ENCODE measurements at regions of chr3 and their contacts with region 1.

Region 1: GRCh38 chr3:49339945-49340800 is at the start of gene USP4:
- DNase-seq: peak; percentile 91
- H3K4me3 ChIP-seq: peak within 1 kb of the TSS; percentile 65 to 75 (median 75)
- H3K27ac ChIP-seq: peak within 1 kb of the TSS; percentile 80
- H3K4me1 ChIP-seq: peaks cover 28% of the 10 kb centered on the region
- H3K27me3 ChIP-seq: no peaks in the 10 kb centered on the region
- CTCF ChIP-seq: peak; percentile 45 to 52
- POLR2A ChIP-seq: peak; percentile 87
- total RNA-seq, gene USP4: 61.3 and 63.0 TPM in 2 replicates

Region 2: GRCh38 chr3:49153349-49153912 is 186.7 kb before region 1 on chr3:
- CTCF ChIA-PET with region 1: no interaction called
- POLR2A ChIA-PET with region 1: no interaction called
- dilution Hi-C with region 1: no loop called
- intact Hi-C with region 1: no loop called
- DNase-seq: no peak
- H3K4me3 ChIP-seq: no peak overlapping the region
- H3K27ac ChIP-seq: no peak overlapping the region
- H3K4me1 ChIP-seq: no peaks in the 10 kb centered on the region
- H3K27me3 ChIP-seq: no peaks in the 10 kb centered on the region
- CTCF ChIP-seq: no peak
- POLR2A ChIP-seq: no peak

Region 3: GRCh38 chr3:49238274-49239127 is 101.7 kb before region 1 on chr3:
- CTCF ChIA-PET with region 1: no interaction called
- POLR2A ChIA-PET with region 1: no interaction called
- dilution Hi-C with region 1: no loop called
- intact Hi-C with region 1: no loop called
- DNase-seq: peak; percentile 99
- H3K4me3 ChIP-seq: no peak overlapping the region
- H3K27ac ChIP-seq: peak overlapping the region; percentile 64
- H3K4me1 ChIP-seq: no peaks in the 10 kb centered on the region
- H3K27me3 ChIP-seq: no peaks in the 10 kb centered on the region
- CTCF ChIP-seq: no peak
- POLR2A ChIP-seq: no peak

Region 4: GRCh38 chr3:49351521-49352011 is 11.4 kb after region 1 on chr3:
- CTCF ChIA-PET with region 1: interaction called, 68 read pairs
- POLR2A ChIA-PET with region 1: interaction called, 39 read pairs
- dilution Hi-C with region 1: no loop called
- intact Hi-C with region 1: no loop called
- DNase-seq: peak; percentile 70
- H3K4me3 ChIP-seq: no peak overlapping the region
- H3K27ac ChIP-seq: peak overlapping the region; percentile 1
- H3K4me1 ChIP-seq: peaks cover 29% of the 10 kb centered on the region
- H3K27me3 ChIP-seq: no peaks in the 10 kb centered on the region
- CTCF ChIP-seq: no peak
- POLR2A ChIP-seq: no peak

Region 5: GRCh38 chr3:49358217-49358883 is 18.2 kb after region 1 on chr3 and contains the start of gene GPX1:
- CTCF ChIA-PET with region 1: interaction called, 68 read pairs
- POLR2A ChIA-PET with region 1: interaction called, 39 read pairs
- dilution Hi-C with region 1: no loop called
- intact Hi-C with region 1: loop called (anchors 1 kb)
- DNase-seq: peak; percentile 94
- H3K4me3 ChIP-seq: peak within 1 kb of the TSS; percentile 25 to 76 (median 71)
- H3K27ac ChIP-seq: peak within 1 kb of the TSS; percentile 66
- H3K4me1 ChIP-seq: peaks cover 31% of the 10 kb centered on the region
- H3K27me3 ChIP-seq: no peaks in the 10 kb centered on the region
- CTCF ChIP-seq: no peak
- POLR2A ChIP-seq: peak; percentile 98
- total RNA-seq, gene GPX1: 427 and 461 TPM in 2 replicates

Region 6: GRCh38 chr3:49411968-49412631 is 71.9 kb after region 1 on chr3 and contains the starts of genes RHOA and TCTA:
- CTCF ChIA-PET with region 1: interaction called, 12 read pairs
- POLR2A ChIA-PET with region 1: interaction called, 14 read pairs
- dilution Hi-C with region 1: no loop called
- intact Hi-C with region 1: loop called (anchors 1 kb)
- DNase-seq: peak; percentile 100
- H3K4me3 ChIP-seq: peak within 1 kb of the TSS; percentile 69 to 100 (median 99)
- H3K27ac ChIP-seq: peak within 1 kb of the TSS; percentile 79
- H3K4me1 ChIP-seq: peaks cover 35% of the 10 kb centered on the region
- H3K27me3 ChIP-seq: no peaks in the 10 kb centered on the region
- CTCF ChIP-seq: no peak
- POLR2A ChIP-seq: peak; percentile 99
- total RNA-seq, gene RHOA: 571 and 580 TPM in 2 replicates
- total RNA-seq, gene TCTA: 18.6 and 21.9 TPM in 2 replicates

Region 7: GRCh38 chr3:49428697-49429100 is 88.5 kb after region 1 on chr3:
- CTCF ChIA-PET with region 1: interaction called, 10 read pairs
- POLR2A ChIA-PET with region 1: no interaction called
- dilution Hi-C with region 1: no loop called
- intact Hi-C with region 1: loop called (anchors 1 kb)
- DNase-seq: no peak
- H3K4me3 ChIP-seq: peak overlapping the region in 2 of 3 experiments; percentile 75 to 92
- H3K27ac ChIP-seq: no peak overlapping the region
- H3K4me1 ChIP-seq: peaks cover 3% of the 10 kb centered on the region
- H3K27me3 ChIP-seq: no peaks in the 10 kb centered on the region
- CTCF ChIP-seq: no peak
- POLR2A ChIP-seq: no peak

Measured in endothelial cell of umbilical vein (primary cell).